IMR-90 (cell line): ENCODE measurements at regions of chr5 and their contacts with region 1.

Region 1: DNA sequence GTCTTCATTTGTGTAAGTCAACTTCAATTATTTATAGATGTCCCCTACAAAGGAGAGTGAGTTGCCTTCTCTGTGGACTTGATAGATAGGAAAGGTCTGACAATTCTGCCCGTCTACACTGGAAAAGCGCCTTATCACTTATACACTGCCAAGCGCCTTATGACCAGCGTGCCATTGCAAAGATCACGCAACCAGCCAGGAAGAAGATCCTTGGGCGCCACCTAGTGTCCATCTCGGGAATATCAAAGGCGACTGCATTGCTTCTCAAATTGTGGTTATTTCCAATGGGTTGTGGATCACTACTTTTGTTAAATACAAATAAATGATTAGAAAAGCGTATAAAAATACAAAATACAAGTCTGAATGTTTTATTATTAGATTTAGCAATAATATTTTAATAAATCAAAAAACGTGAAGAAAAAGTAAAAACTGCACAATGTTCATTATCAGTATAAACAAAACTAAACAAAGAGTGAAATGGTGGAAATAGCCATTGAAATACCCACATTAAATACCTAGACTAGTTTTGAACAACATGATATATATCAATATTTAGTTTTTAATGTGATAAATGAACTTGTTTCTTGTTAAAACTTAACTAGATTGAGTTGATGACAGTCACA is 27.8 kb downstream of the SUB1 start:
- DNase-seq: peak; percentile 75
- ATAC-seq: peak; percentile 87
- H3K4me3 ChIP-seq: no peak overlapping the region
- H3K27ac ChIP-seq: no peak overlapping the region
- H3K4me1 ChIP-seq: peaks cover 3% of the 10 kb centered on the region
- H3K27me3 ChIP-seq: no peaks in the 10 kb centered on the region
- CTCF ChIP-seq: peak; percentile 91
- POLR2A ChIP-seq: 0 out of 2 replicates have a peak, but pooled peaks have one; percentile 29
- RAD21 ChIP-seq: peak; percentile 93

Region 2: DNA sequence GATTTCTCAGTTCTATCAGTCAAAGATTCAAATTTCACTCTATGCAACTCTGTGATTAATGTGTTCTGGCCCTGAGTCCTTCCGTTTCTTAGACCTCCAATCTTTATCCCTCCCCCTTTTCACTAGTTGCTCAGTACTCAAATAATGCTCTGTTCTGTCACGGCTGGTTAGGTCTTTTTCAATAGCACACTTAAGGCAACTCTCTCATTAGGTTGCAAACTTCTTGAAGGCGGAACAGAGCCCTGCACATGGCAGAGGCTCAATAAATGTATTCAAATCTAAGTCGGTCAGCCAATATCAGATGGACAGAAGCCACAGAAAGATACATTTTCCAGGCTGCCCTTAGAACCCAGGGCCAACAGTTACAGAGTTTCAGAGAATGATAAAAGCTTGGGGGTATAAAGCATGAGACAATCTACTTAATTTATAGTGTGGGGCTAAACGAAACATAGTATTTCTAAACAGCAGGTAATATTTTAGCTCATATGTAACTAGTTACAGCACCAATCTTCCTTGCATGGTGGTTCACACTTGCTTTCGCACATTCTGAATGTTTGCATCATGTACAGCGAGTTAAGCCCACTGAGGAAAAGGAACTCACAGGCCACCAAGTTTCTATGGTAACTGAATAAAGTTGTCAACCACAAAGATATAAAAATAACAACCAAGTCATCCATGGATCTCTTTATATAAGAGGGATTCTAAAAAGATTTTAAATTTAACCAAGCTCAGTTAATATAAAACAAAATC is 372.0 kb before region 1 on chr5:
- CTCF ChIA-PET with region 1: no interaction called
- POLR2A ChIA-PET with region 1: no interaction called
- dilution Hi-C with region 1: no loop called
- in situ Hi-C with region 1: loop called (anchors 10 kb)
- intact Hi-C with region 1: no loop called
- DNase-seq: no peak
- ATAC-seq: no peak
- H3K4me3 ChIP-seq: no peak overlapping the region
- H3K27ac ChIP-seq: no peak overlapping the region
- H3K4me1 ChIP-seq: no peaks in the 10 kb centered on the region
- H3K27me3 ChIP-seq: no peaks in the 10 kb centered on the region
- CTCF ChIP-seq: no peak
- POLR2A ChIP-seq: no peak
- RAD21 ChIP-seq: no peak

Region 3: DNA sequence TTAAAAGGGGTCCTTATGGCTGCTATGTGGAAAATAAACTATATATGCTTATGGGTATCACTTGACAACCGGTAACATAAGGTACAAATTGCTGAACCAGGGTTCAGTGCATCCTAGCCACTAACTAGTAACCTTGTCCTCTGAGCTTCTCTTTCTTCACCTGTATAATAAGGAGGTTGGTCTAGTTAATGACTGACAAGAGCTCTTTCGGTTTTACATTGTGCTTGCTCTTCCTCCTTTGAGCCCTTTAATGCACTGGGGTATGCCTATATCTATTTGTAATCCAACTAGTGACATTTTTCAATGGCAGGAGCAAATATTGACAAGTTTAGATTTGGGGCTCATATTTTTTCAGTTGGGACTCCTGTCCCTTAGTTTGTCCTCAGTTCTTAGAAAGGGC is 164.1 kb after region 1 on chr5:
- CTCF ChIA-PET with region 1: no interaction called
- POLR2A ChIA-PET with region 1: no interaction called
- dilution Hi-C with region 1: no loop called
- in situ Hi-C with region 1: no loop called
- intact Hi-C with region 1: no loop called
- DNase-seq: no peak
- ATAC-seq: no peak
- H3K4me3 ChIP-seq: no peak overlapping the region
- H3K27ac ChIP-seq: no peak overlapping the region
- H3K4me1 ChIP-seq: peaks cover 4% of the 10 kb centered on the region
- H3K27me3 ChIP-seq: no peaks in the 10 kb centered on the region
- CTCF ChIP-seq: no peak
- POLR2A ChIP-seq: no peak
- RAD21 ChIP-seq: no peak